ENCODE measurements at regions of chr6 and their contacts with region 1.

Region 1: GRCh38 chr6:118551063-118552053 is 3.3 kb downstream of the PLN start:
- DNase-seq: no peak
- H3K4me3 ChIP-seq: no peak overlapping the region
- H3K27ac ChIP-seq: no peak overlapping the region
- H3K4me1 ChIP-seq: no peaks in the 10 kb centered on the region
- H3K27me3 ChIP-seq: no peaks in the 10 kb centered on the region
- CTCF ChIP-seq: peak in 3 of 4 experiments; percentile 33 to 62 (median 58)
- POLR2A ChIP-seq: no peak

Region 2: DNA sequence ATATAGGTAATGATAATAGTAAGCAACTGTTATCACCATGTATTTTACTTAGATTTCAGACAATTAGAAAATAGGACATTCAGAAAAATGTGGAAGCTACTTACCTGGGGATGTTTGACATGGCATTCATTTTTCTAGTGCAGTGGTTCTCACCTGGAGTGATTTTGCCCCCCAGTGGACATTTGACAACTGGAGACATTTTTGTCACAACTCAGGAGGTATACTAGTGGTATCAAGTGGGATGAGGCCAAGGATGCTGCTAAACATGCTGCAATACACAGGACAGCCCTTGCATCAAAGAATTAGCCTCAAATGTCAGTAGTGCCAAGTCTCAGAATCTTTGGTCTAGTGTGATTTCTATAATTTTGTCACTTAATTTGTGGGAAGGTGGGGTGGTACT is 840.0 kb before region 1 on chr6:
- intact Hi-C with region 1: no loop called
- DNase-seq: no peak
- H3K4me3 ChIP-seq: no peak overlapping the region
- H3K27ac ChIP-seq: no peak overlapping the region
- H3K4me1 ChIP-seq: no peaks in the 10 kb centered on the region
- H3K27me3 ChIP-seq: no peaks in the 10 kb centered on the region
- CTCF ChIP-seq: no peak
- POLR2A ChIP-seq: no peak

Region 3: GRCh38 chr6:118476551-118476950 is 74.8 kb before region 1 on chr6:
- intact Hi-C with region 1: no loop called
- DNase-seq: no peak
- H3K4me3 ChIP-seq: no peak overlapping the region
- H3K27ac ChIP-seq: no peak overlapping the region
- H3K4me1 ChIP-seq: no peaks in the 10 kb centered on the region
- H3K27me3 ChIP-seq: no peaks in the 10 kb centered on the region
- CTCF ChIP-seq: no peak
- POLR2A ChIP-seq: no peak

Region 4: DNA sequence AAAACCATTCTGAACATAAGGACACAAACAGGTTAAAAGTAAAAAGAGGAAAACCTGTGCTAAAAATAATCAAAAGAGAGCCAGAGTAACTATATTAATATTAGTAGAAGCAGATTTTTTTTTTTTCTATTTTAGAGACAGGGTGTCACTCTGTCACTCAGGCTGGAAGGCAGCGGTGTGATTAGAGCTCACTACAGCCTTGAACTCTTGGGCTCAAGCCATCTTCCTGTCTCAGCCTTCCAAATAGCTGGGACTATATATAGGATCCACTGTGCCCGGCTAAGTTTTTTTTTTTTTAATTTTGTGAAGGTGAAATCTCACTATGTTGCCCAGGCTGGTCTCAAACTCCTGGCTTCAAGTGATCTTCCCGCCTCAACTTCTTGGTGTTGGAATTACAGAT is 36.7 kb before region 1 on chr6:
- intact Hi-C with region 1: loop called (anchors 5 kb)
- DNase-seq: no peak
- H3K4me3 ChIP-seq: no peak overlapping the region
- H3K27ac ChIP-seq: no peak overlapping the region
- H3K4me1 ChIP-seq: no peaks in the 10 kb centered on the region
- H3K27me3 ChIP-seq: no peaks in the 10 kb centered on the region
- CTCF ChIP-seq: no peak
- POLR2A ChIP-seq: no peak